WTC11 (cell line): ENCODE measurements at regions of chr12 and their contacts with region 1.

Region 1: DNA sequence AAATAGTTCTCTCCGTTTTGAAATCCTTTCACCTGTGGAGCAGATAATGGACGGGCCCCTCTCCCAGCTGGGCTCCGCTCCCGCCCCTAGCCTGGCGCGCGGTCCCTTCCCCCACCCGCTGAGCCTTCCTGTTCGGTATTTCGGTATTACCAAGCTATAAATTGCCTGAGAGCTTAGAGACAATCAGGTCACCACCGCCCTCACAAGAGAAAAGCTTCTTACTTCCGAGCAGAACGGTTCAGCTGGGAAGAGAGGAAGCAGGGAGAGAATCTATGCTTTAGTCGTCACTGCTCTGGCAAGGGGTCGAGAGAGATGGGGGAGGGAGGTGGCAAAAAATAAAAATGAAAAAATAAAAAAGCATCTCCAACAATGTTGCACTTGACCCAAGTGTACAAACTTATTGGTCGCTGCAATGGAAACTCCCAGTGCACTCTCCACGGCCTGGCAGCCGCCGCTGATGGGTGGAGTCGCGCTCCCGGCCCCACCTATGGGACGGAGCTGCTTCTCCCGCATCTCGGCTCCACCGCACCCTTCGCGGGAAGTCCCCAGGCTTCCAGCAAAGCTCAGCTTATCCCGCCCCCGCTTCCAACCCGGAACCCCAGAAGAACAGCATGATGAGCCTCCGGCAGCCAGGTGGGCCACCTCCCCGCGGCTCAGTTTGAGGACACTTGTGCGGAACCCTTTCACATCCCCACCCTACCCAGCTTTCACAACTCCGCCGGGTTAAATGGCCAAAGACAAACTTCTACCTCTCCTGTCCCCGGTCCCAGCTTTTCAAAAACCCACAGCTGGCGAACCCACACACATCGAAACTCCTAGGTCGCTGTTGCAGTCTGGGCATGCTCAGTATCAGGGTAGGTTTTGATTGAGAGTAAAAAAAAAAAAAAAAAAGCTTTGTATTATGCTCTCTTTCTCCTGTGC is 832 bp upstream of the SYT1 start:
- DNase-seq: peak; percentile 81
- ATAC-seq: peak; percentile 50
- H3K4me3 Mint-ChIP-seq: peak overlapping the region; percentile 96
- H3K27ac Mint-ChIP-seq: peak overlapping the region; percentile 99
- H3K4me1 Mint-ChIP-seq: peaks cover 45% of the 10 kb centered on the region
- H3K27me3 Mint-ChIP-seq: no peaks in the 10 kb centered on the region
- CTCF ChIP-seq: no peak

Region 2: GRCh38 chr12:78651755-78652154 is 212.0 kb before region 1 on chr12:
- CTCF ChIA-PET with region 1: no interaction called
- POLR2A ChIA-PET with region 1: no interaction called
- DNase-seq: no peak
- ATAC-seq: peak; percentile 92
- H3K4me3 Mint-ChIP-seq: no peak overlapping the region
- H3K27ac Mint-ChIP-seq: no peak overlapping the region
- H3K4me1 Mint-ChIP-seq: no peaks in the 10 kb centered on the region
- H3K27me3 Mint-ChIP-seq: peaks cover 94% of the 10 kb centered on the region
- CTCF ChIP-seq: no peak

Region 3: GRCh38 chr12:78853231-78853630 is 10.5 kb before region 1 on chr12:
- CTCF ChIA-PET with region 1: no interaction called
- POLR2A ChIA-PET with region 1: interaction called, 10 read pairs
- DNase-seq: no peak
- ATAC-seq: no peak
- H3K4me3 Mint-ChIP-seq: no peak overlapping the region
- H3K27ac Mint-ChIP-seq: no peak overlapping the region
- H3K4me1 Mint-ChIP-seq: no peaks in the 10 kb centered on the region
- H3K27me3 Mint-ChIP-seq: no peaks in the 10 kb centered on the region
- CTCF ChIP-seq: no peak

Region 4: DNA sequence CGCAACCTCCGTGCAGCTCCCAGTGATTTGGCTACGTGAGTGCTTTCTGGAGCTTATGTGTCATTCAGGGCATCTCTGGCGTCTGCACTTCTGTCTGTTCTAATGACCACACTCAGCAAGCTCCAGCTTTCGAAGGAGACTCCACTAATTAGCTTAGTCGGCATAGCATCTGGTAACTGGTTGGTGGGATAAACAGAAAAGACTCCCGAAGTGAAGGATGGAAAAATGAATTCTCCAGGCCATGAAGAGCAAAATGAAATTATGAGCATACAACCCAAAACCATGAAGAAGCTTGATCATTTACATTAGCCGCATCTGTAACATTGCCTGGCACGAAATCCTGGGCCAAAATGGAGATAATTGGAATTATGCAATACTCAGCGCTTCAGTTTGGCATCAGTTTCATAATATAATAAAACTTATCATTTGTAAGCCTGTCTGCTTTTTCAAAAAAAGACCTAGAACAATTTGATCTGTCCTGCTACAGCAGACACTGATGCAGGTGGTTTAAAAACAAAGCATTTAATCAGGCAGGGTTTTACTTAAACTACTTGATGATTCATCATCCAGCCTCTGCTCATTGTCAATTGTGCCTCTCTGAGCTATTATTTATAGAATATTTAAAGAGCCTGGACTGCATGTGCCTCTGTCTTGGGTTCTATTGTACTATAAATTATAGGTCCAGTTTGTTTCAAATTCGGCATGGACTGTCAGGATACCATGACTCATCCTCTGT is 88.2 kb after region 1 on chr12:
- CTCF ChIA-PET with region 1: no interaction called
- POLR2A ChIA-PET with region 1: no interaction called
- DNase-seq: no peak
- ATAC-seq: no peak
- H3K4me3 Mint-ChIP-seq: no peak overlapping the region
- H3K27ac Mint-ChIP-seq: no peak overlapping the region
- H3K4me1 Mint-ChIP-seq: no peaks in the 10 kb centered on the region
- H3K27me3 Mint-ChIP-seq: no peaks in the 10 kb centered on the region
- CTCF ChIP-seq: no peak